Activated CD4-positive, alpha-beta T cell treated with anti-CD3 and anti-CD28 coated beads for 36 hours (primary cell): ENCODE measurements at regions of chr6 and their contacts with region 1.

Region 1: DNA sequence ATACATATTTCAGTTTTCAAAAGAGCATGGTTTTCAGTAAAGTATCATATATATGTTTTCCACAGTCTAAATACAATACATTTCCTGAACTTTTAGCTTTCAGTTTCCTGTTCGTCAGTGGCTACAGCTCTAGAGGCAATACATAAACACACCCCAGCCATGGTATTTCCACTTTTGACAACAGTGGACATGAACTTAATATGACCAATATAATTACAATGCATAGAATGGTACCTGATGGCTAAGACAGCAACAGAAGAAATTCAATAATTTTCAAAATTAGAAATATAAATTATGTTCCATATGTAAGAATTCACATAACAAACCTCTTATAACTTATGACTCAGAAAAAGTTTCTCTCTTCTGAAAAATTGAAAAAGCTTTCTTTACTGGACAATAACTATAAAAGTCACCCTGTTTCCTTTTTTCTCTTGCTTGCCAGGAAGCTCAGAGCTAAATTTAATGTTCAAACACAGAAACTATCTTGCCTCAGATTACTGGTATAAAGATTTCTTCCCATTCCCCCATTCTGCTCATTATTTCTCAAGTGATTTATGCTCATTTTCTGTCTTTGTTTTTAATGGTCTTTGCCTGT is 19.2 kb downstream of the FKBP5 start:
- DNase-seq: no peak
- ATAC-seq: peak; percentile 60
- H3K4me3 Mint-ChIP-seq: peak overlapping the region; percentile 59
- H3K27ac Mint-ChIP-seq: peak overlapping the region; percentile 87
- H3K4me1 Mint-ChIP-seq: peaks cover 49% of the 10 kb centered on the region
- H3K27me3 Mint-ChIP-seq: no peaks in the 10 kb centered on the region

Region 2: DNA sequence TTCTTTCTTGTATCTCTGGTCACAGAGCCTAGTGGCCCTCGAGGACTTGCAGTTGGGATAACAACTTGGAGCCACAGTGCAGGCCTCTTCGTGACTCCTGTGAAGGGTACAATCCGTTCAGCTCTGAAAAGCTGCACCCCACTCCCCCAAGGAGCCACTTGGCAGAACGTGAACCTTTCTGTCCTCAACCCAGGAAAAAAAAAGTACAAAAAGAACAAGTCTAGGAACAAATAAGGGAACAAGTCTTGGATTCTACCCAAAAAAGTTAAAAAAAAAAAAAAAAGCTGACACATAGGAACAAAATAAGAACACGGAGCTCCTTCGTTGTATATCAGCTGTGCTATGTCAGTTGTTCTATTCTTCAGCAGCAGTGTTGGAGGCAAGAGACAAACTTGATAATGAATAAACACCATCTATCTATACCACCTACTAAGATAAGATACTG is 78.9 kb before region 1 on chr6:
- CTCF ChIA-PET with region 1: interaction called, 5 read pairs
- POLR2A ChIA-PET with region 1: interaction called, 10 read pairs
- intact Hi-C with region 1: no loop called
- DNase-seq: no peak
- ATAC-seq: no peak
- H3K4me3 Mint-ChIP-seq: no peak overlapping the region
- H3K27ac Mint-ChIP-seq: peak overlapping the region; percentile 47
- H3K4me1 Mint-ChIP-seq: peaks cover 88% of the 10 kb centered on the region
- H3K27me3 Mint-ChIP-seq: no peaks in the 10 kb centered on the region

Region 3: DNA sequence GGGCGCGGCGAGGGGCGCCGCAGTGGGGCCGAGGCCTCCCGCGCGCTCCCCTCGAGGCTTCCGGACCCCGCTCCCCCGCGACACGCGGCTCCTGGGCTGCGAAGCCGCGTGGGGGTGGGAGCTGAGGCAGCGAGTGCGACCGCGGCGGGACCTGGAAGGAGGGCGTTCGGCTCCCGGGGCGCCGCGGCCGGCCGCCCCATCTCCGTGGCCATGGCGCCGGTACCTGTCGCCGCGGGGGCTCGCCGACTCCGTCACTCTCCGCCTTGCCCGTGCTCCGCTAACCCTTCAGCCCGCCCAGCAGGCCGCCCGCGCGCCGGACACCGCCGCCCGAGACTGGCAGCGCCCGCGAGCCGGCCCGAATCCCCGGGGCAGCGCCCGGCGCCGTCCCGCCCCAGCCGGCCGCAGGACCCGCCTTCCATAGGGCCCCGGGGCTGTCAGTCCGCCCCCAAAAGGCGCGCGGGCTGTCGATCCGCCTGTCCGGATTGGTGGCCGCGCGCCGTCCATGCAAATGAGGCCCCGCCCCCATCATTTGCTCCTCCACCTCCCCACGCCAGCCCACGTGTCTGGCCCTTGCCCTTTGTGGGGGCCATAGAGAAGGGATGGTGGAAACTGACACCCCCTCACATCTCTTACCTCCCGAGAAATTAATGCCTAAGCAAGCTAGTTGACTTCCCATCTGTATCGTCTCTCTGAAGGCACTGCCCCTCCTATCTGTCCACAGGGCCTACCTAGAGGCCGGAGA is 19.2 kb after region 1 on chr6 and contains the start of gene FKBP5:
- CTCF ChIA-PET with region 1: interaction called, 35 read pairs
- POLR2A ChIA-PET with region 1: interaction called, 4 read pairs
- intact Hi-C with region 1: loop called in 1 of 2 experiments (anchors 2 kb)
- DNase-seq: peak; percentile 94
- ATAC-seq: peak; percentile 95
- H3K4me3 Mint-ChIP-seq: peak within 1 kb of the TSS; percentile 93
- H3K27ac Mint-ChIP-seq: peak within 1 kb of the TSS; percentile 93
- H3K4me1 Mint-ChIP-seq: peaks cover 8% of the 10 kb centered on the region
- H3K27me3 Mint-ChIP-seq: no peaks in the 10 kb centered on the region
- total RNA-seq, gene FKBP5: 140 to 141 TPM